Caco-2 (cell line): ENCODE measurements at regions of chr18 and their contacts with region 1.

Region 1: DNA sequence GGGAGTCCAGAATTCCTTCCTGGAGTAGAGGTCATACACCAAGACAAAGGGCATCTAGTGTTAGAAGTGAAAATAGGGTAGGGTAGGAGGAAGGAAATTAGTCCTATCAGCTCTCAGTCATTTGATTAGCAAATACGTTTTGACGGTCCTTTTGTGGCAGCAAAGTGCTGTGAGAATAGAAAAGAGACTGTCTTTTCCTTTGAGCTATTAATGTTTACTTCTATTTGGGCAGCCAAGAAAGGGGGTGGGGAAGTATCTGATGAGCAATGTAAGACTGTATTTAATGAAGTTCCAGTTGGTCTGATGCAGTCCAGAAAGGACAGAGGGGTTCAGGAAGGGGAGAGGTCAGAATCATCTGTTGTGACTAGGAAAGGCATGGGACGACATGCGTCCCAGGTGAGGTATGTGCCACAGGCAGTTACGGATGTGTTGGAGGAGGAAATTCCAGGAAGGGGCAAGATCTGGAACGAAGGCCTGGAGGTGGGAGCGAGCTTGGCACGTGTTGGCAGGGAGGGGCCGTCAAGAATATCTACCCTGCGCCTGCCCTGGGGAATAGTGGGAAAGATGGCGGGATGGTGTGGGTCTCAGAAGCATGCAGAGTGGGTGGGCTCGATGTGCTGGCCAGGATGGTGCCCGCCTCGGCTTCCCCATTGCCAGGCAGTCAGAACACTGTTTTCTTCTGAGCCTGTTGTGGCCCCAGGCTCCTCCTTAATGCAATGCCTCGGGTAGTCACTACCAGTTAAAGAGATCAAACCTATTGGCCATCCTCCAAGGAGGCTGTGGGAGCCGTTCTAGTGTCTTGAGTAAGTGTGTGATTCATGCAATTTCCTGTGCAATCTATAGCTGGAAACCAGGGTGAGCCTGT is 57.9 kb upstream of the TXNDC2 start:
- DNase-seq: no peak
- H3K4me3 ChIP-seq: no peak overlapping the region
- H3K4me3 Mint-ChIP-seq: no peak overlapping the region
- H3K27ac Mint-ChIP-seq: peak overlapping the region; percentile 6
- H3K4me1 ChIP-seq: peaks cover 28% of the 10 kb centered on the region
- H3K4me1 Mint-ChIP-seq: peaks cover 18% of the 10 kb centered on the region
- H3K27me3 ChIP-seq: no peaks in the 10 kb centered on the region
- H3K27me3 Mint-ChIP-seq: no peaks in the 10 kb centered on the region
- CTCF ChIP-seq: no peak

Region 2: GRCh38 chr18:9808295-9809241 is 19.3 kb before region 1 on chr18:
- CTCF ChIA-PET with region 1: interaction called, 9 read pairs
- POLR2A ChIA-PET with region 1: no interaction called
- intact Hi-C with region 1: loop called (anchors 1 kb)
- DNase-seq: peak; percentile 54 to 56
- H3K4me3 ChIP-seq: no peak overlapping the region
- H3K4me3 Mint-ChIP-seq: peak overlapping the region; percentile 36
- H3K27ac Mint-ChIP-seq: peak overlapping the region; percentile 75
- H3K4me1 ChIP-seq: peaks cover 38% of the 10 kb centered on the region
- H3K4me1 Mint-ChIP-seq: peaks cover 16% of the 10 kb centered on the region
- H3K27me3 ChIP-seq: no peaks in the 10 kb centered on the region
- H3K27me3 Mint-ChIP-seq: no peaks in the 10 kb centered on the region
- CTCF ChIP-seq: no peak

Region 3: DNA sequence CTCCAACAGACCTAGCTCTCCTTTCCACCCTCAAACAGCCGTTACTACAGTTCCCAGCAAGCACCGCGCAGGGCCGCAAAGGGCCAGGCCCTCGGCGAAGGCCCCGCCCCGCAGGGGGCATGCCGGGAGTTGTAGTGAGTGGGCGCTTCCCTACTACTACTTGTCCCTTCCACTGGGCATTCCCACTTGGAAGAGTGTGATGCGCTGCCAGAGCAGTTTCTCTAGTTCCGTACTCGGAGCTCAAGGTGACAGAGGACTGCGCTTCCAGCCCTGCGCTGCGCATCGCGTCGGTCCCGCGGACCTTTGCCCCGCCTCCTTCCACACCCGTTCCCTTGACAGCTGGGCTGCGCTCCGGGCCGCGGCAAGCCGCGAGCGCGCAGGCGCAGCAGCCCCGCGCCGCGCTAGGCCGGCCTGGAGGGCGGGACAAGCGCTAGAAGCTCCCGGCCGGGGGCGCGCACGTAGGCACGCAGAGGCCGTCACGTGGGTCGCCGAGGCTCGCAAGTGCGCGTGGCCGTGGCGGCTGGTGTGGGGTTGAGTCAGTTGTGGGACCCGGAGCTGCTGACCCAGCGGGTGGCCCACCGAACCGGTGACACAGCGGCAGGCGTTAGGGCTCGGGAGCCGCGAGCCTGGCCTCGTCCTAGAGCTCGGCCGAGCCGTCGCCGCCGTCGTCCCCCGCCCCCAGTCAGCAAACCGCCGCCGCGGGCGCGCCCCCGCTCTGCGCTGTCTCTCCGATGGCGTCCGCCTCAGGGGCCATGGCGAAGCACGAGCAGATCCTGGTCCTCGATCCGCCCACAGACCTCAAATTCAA is 85.9 kb after region 1 on chr18 and contains the start of gene VAPA:
- CTCF ChIA-PET with region 1: no interaction called
- POLR2A ChIA-PET with region 1: no interaction called
- intact Hi-C with region 1: loop called (anchors 5 kb)
- DNase-seq: peak; percentile 93 to 95
- H3K4me3 ChIP-seq: peak within 1 kb of the TSS; percentile 97
- H3K4me3 Mint-ChIP-seq: peak within 1 kb of the TSS; percentile 87
- H3K27ac Mint-ChIP-seq: peak within 1 kb of the TSS; percentile 75
- H3K4me1 ChIP-seq: peaks cover 14% of the 10 kb centered on the region
- H3K4me1 Mint-ChIP-seq: peaks cover 14% of the 10 kb centered on the region
- H3K27me3 ChIP-seq: no peaks in the 10 kb centered on the region
- H3K27me3 Mint-ChIP-seq: no peaks in the 10 kb centered on the region
- CTCF ChIP-seq: no peak
- total RNA-seq, gene VAPA: 205 and 222 TPM in 2 replicates